Panc1 (cell line): ENCODE measurements at regions of chr3 and their contacts with region 1.

Region 1: GRCh38 chr3:189664311-189664710 is 33.1 kb downstream of the TP63 start:
- DNase-seq: peak; percentile 33
- ATAC-seq: no peak
- H3K4me3 ChIP-seq: no peak overlapping the region
- H3K27ac ChIP-seq: no peak overlapping the region
- H3K4me1 ChIP-seq: no peaks in the 10 kb centered on the region
- H3K27me3 ChIP-seq: no peaks in the 10 kb centered on the region
- CTCF ChIP-seq: no peak

Region 2: DNA sequence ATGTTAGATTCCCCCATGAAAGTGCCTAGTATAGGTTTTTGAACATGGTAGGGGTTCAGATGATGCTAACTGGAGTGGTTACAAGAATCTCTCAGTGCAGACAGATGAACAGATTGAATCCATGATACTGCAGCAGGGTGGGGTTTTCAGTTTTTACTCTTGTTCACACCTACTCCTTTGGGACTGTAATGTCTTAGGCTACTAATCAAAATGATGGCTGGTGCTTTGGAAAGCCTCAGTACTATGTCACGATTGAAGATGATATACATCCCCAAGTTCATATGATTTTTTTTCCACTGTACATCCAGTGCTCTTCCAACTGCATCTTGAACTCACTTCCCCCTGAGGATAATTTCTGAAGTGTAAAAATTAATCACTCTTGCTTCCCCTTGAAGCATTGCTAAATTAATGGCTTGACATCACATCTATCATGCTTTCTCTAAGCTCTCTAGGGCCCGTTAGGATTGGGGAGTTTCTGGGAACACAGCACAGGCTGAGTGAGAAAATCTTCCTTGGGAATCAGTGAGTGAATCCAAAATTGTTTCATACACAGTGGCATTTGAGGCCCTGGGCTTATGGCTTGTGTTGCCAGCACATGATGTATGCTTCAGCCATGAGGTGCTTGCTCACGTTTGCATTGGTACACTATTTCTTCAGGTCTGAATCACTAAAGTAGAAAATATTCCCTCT is 607.5 kb before region 1 on chr3:
- CTCF ChIA-PET with region 1: no interaction called
- POLR2A ChIA-PET with region 1: no interaction called
- in situ Hi-C with region 1: no loop called
- intact Hi-C with region 1: no loop called
- DNase-seq: no peak
- ATAC-seq: no peak
- H3K4me3 ChIP-seq: no peak overlapping the region
- H3K27ac ChIP-seq: no peak overlapping the region
- H3K4me1 ChIP-seq: no peaks in the 10 kb centered on the region
- H3K27me3 ChIP-seq: no peaks in the 10 kb centered on the region; the same call in 1 of the 2 replicates
- CTCF ChIP-seq: no peak

Region 3: GRCh38 chr3:189270248-189270832 is 394.0 kb before region 1 on chr3:
- CTCF ChIA-PET with region 1: no interaction called
- POLR2A ChIA-PET with region 1: no interaction called
- in situ Hi-C with region 1: no loop called
- intact Hi-C with region 1: loop called (anchors 10 kb)
- DNase-seq: peak; percentile 68
- ATAC-seq: peak; percentile 96
- H3K4me3 ChIP-seq: no peak overlapping the region
- H3K27ac ChIP-seq: no peak overlapping the region
- H3K4me1 ChIP-seq: no peaks in the 10 kb centered on the region
- H3K27me3 ChIP-seq: no peaks in the 10 kb centered on the region
- CTCF ChIP-seq: peak; percentile 85

Region 4: GRCh38 chr3:189848395-189849040 is 184.2 kb after region 1 on chr3:
- CTCF ChIA-PET with region 1: no interaction called
- POLR2A ChIA-PET with region 1: no interaction called
- in situ Hi-C with region 1: no loop called
- intact Hi-C with region 1: no loop called
- DNase-seq: no peak
- ATAC-seq: no peak
- H3K4me3 ChIP-seq: no peak overlapping the region
- H3K27ac ChIP-seq: no peak overlapping the region
- H3K4me1 ChIP-seq: no peaks in the 10 kb centered on the region
- H3K27me3 ChIP-seq: no peaks in the 10 kb centered on the region
- CTCF ChIP-seq: no peak

Region 5: GRCh38 chr3:190458040-190458439 is 793.7 kb after region 1 on chr3:
- CTCF ChIA-PET with region 1: no interaction called
- POLR2A ChIA-PET with region 1: no interaction called
- in situ Hi-C with region 1: no loop called
- intact Hi-C with region 1: no loop called
- DNase-seq: no peak
- ATAC-seq: 0 out of 2 replicates have a peak, but pooled peaks have one; percentile 66
- H3K4me3 ChIP-seq: no peak overlapping the region
- H3K27ac ChIP-seq: no peak overlapping the region
- H3K4me1 ChIP-seq: no peaks in the 10 kb centered on the region
- H3K27me3 ChIP-seq: no peaks in the 10 kb centered on the region
- CTCF ChIP-seq: peak; percentile 11; the same call in 1 of the 2 replicates